ENCODE measurements at regions of chr3 and their contacts with region 1.

Region 1: GRCh38 chr3:159260049-159260662 is 458.3 kb downstream of the MFSD1 start:
- DNase-seq: peak; percentile 77
- H3K4me3 Mint-ChIP-seq: no peak overlapping the region
- H3K27ac Mint-ChIP-seq: no peak overlapping the region
- H3K4me1 Mint-ChIP-seq: no peaks in the 10 kb centered on the region
- H3K27me3 Mint-ChIP-seq: peaks cover 49% of the 10 kb centered on the region
- CTCF ChIP-seq: peak; percentile 81

Region 2: GRCh38 chr3:158845765-158846350 is 414.3 kb before region 1 on chr3:
- CTCF ChIA-PET with region 1: interaction called, 231 read pairs
- POLR2A ChIA-PET with region 1: interaction called, 4 read pairs
- intact Hi-C with region 1: loop called (anchors 1 kb)
- DNase-seq: peak; percentile 51
- H3K4me3 Mint-ChIP-seq: no peak overlapping the region
- H3K27ac Mint-ChIP-seq: no peak overlapping the region
- H3K4me1 Mint-ChIP-seq: no peaks in the 10 kb centered on the region
- H3K27me3 Mint-ChIP-seq: no peaks in the 10 kb centered on the region
- CTCF ChIP-seq: peak; percentile 72

Region 3: GRCh38 chr3:159245871-159246270 is 14.3 kb before region 1 on chr3:
- CTCF ChIA-PET with region 1: interaction called, 20 read pairs
- POLR2A ChIA-PET with region 1: interaction called, 3 read pairs
- intact Hi-C with region 1: no loop called
- DNase-seq: no peak
- H3K4me3 Mint-ChIP-seq: no peak overlapping the region
- H3K27ac Mint-ChIP-seq: no peak overlapping the region
- H3K4me1 Mint-ChIP-seq: no peaks in the 10 kb centered on the region
- H3K27me3 Mint-ChIP-seq: peaks cover 10% of the 10 kb centered on the region
- CTCF ChIP-seq: no peak

Region 4: DNA sequence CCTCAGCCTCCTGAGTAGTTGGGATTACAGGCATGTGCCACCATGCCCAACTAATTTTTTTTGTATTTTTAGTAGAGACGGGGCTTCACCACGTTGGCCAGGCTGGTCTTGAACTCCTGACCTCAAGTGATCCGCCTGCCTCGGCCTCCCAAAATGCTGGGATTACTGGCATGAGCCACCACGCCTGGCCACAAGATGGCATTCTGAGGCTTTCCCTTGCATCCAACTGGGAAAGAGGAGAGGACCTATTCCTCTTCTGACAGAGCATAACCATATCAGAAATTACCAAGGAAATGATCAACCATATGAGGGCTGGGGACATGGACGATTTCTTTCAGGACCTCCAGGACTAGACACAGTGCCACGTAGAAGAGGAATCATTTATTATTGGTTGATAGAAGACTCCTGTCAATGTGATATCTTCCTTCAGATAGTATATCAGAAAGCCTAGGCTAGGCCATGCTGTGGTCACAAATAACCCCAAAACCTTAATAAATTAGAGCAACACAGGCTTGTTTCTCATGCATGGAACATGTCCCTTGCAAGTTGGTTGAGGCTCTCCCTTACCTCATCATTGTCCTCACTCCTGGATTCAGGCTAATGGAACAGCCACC is 356.2 kb after region 1 on chr3:
- CTCF ChIA-PET with region 1: interaction called, 6 read pairs
- POLR2A ChIA-PET with region 1: no interaction called
- intact Hi-C with region 1: loop called (anchors 10 kb)
- DNase-seq: peak; percentile 67
- H3K4me3 Mint-ChIP-seq: no peak overlapping the region
- H3K27ac Mint-ChIP-seq: no peak overlapping the region
- H3K4me1 Mint-ChIP-seq: peaks cover 14% of the 10 kb centered on the region
- H3K27me3 Mint-ChIP-seq: no peaks in the 10 kb centered on the region
- CTCF ChIP-seq: peak; percentile 83

Region 5: DNA sequence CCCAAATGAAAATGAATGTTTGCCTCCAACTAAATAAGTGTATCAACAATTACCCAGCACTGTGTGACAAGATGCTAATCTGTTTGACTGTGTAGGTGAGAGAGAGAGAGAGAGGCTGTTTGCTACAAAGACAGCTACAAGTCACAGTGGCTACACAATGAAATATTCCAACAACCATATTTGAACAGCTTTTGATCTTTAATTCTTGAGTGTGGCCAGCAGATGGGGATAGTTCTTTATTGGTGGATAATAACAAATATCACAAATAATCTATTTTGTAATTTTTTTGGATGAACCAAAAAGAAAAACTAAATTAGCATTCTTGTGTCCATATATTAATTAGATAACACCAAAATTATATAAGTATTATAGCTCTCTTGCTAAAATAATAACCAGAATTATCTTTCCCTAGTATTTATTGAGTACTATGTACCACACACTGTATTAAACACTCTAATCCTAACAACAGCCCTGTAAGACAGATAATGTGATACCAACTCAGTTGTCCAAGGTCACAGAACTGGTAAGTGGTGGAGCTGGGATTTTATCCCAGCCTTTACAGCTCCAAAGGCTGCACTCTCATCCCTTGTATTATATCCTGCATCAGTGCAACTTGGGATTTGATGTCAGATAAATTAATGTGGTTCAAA is 903.2 kb after region 1 on chr3:
- CTCF ChIA-PET with region 1: no interaction called
- POLR2A ChIA-PET with region 1: no interaction called
- intact Hi-C with region 1: loop called (anchors 10 kb)
- DNase-seq: peak; percentile 37
- H3K4me3 Mint-ChIP-seq: no peak overlapping the region
- H3K27ac Mint-ChIP-seq: no peak overlapping the region
- H3K4me1 Mint-ChIP-seq: peaks cover 4% of the 10 kb centered on the region
- H3K27me3 Mint-ChIP-seq: no peaks in the 10 kb centered on the region
- CTCF ChIP-seq: peak; percentile 39